CD8-positive, alpha-beta T cell (primary cell): ENCODE measurements at regions of chr20 and their contacts with region 1.

Region 1: DNA sequence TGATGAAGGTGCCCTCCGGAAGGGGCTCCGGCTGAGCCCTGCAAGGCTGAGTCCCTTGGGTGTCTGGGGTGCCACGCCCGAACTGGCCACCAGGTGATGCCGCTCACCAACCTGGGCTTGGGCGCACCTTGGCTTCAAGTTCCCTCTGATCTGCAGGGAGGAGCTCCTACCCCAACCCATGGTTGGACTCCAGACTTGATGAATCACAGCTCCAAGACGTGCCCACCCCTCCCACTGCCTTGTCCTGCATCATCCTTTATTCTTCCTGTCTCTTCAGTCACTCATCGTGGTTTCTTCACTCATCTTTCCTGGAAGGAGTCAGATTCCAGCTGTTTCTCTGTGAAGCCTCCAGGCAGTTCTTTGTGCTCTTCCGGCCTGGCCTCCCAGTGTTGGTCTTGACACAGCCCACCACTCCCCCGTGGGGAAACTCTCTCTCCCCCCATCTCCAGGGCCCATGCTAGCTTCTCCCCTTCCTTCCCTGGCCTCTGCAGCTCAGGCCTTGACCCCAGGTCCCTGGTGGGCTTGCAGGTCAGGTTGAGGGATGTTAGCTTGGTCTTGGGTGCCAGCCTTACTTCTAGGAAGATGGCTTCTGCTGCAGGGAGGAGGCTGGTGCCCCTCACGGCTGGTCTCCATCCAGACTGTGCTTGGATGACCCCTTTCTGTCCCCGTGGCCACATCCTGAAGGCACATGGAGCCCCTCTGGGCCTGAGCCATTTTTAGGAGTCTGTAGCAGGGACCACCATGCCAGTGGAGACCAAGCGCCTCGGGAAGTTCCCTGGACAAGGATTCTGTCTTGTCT is 2.6 kb upstream of the ZBP1 start:
- DNase-seq: peak; percentile 52 to 80 (median 76)
- ATAC-seq: peak; percentile 34
- H3K4me3 ChIP-seq: no peak overlapping the region
- H3K4me3 Mint-ChIP-seq: peak overlapping the region; percentile 57
- H3K27ac ChIP-seq: no peak overlapping the region
- H3K27ac Mint-ChIP-seq: peak overlapping the region; percentile 84
- H3K4me1 ChIP-seq: peaks cover 73% of the 10 kb centered on the region
- H3K4me1 Mint-ChIP-seq: peaks cover 78% of the 10 kb centered on the region
- H3K27me3 ChIP-seq: no peaks in the 10 kb centered on the region
- H3K27me3 Mint-ChIP-seq: no peaks in the 10 kb centered on the region
- CTCF ChIP-seq: peak; percentile 72

Region 2: DNA sequence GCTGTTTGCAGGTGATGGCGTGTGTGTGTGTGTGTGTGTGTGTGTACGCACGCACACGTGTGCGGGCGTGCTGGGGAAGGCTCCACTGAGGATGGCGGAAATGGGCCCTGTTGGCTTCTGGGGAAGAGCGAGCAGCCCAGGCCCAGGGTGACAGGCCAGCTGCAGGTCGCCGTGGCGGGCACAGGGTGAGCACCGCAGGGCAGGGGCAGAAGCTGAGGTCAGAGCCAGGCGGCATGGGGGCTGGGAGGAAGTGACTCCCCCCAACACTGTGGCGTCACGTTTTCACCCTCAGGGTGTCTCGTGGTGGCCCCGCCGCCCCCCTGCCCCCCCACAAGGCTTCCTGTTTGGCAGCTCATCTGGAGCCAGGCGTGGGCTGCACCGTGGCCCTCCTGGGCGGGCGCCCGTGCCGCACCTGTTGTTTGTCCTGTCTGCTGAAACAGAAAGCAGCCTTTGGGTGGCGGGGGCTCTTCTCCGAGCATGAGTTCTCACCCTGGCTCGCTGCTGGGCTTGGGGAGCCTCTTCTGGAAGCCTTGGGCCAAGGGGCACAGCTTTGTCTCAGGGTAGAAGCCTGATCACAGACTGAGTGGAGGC is 224.5 kb before region 1 on chr20:
- CTCF ChIA-PET with region 1: no interaction called
- POLR2A ChIA-PET with region 1: interaction called, 3 read pairs
- intact Hi-C with region 1: loop called (anchors 1 to 2 kb)
- DNase-seq: peak; percentile 88 to 98 (median 96)
- ATAC-seq: peak; percentile 69
- H3K4me3 ChIP-seq: peak overlapping the region; percentile 40 to 63
- H3K4me3 Mint-ChIP-seq: peak overlapping the region; percentile 76
- H3K27ac ChIP-seq: peak overlapping the region; percentile 78 to 90
- H3K27ac Mint-ChIP-seq: peak overlapping the region; percentile 97
- H3K4me1 ChIP-seq: peaks cover 96% of the 10 kb centered on the region
- H3K4me1 Mint-ChIP-seq: peaks cover 93% of the 10 kb centered on the region
- H3K27me3 ChIP-seq: no peaks in the 10 kb centered on the region
- H3K27me3 Mint-ChIP-seq: no peaks in the 10 kb centered on the region
- CTCF ChIP-seq: no peak

Region 3: GRCh38 chr20:57654363-57654997 is 31.7 kb after region 1 on chr20:
- CTCF ChIA-PET with region 1: interaction called, 103 read pairs
- POLR2A ChIA-PET with region 1: interaction called, 9 read pairs
- intact Hi-C with region 1: loop called (anchors 1 to 2 kb)
- DNase-seq: peak; percentile 32 to 82 (median 62)
- ATAC-seq: peak; percentile 74
- H3K4me3 ChIP-seq: no peak overlapping the region
- H3K4me3 Mint-ChIP-seq: no peak overlapping the region
- H3K27ac ChIP-seq: no peak overlapping the region
- H3K27ac Mint-ChIP-seq: no peak overlapping the region
- H3K4me1 ChIP-seq: peaks cover 39% of the 10 kb centered on the region
- H3K4me1 Mint-ChIP-seq: peaks cover 38% of the 10 kb centered on the region
- H3K27me3 ChIP-seq: no peaks in the 10 kb centered on the region
- H3K27me3 Mint-ChIP-seq: no peaks in the 10 kb centered on the region
- CTCF ChIP-seq: peak; percentile 94

Region 4: GRCh38 chr20:57665589-57665971 is 42.8 kb after region 1 on chr20:
- CTCF ChIA-PET with region 1: no interaction called
- POLR2A ChIA-PET with region 1: no interaction called
- intact Hi-C with region 1: no loop called
- DNase-seq: no peak
- ATAC-seq: no peak
- H3K4me3 ChIP-seq: no peak overlapping the region
- H3K4me3 Mint-ChIP-seq: no peak overlapping the region
- H3K27ac ChIP-seq: no peak overlapping the region
- H3K27ac Mint-ChIP-seq: no peak overlapping the region
- H3K4me1 ChIP-seq: peaks cover 15% of the 10 kb centered on the region
- H3K4me1 Mint-ChIP-seq: peaks cover 15% of the 10 kb centered on the region
- H3K27me3 ChIP-seq: peaks cover 0 to 3% of the 10 kb centered on the region in 2 experiments
- H3K27me3 Mint-ChIP-seq: no peaks in the 10 kb centered on the region
- CTCF ChIP-seq: no peak

Region 5: GRCh38 chr20:57709931-57710799 is 87.4 kb after region 1 on chr20 and contains the start of gene PMEPA1:
- CTCF ChIA-PET with region 1: interaction called, 8 read pairs
- POLR2A ChIA-PET with region 1: interaction called, 3 read pairs
- intact Hi-C with region 1: loop called in 1 of 2 experiments (anchors 2 kb)
- DNase-seq: peak; percentile 87 to 97 (median 91)
- ATAC-seq: peak; percentile 86
- H3K4me3 ChIP-seq: peak within 1 kb of the TSS; percentile 64 to 99
- H3K4me3 Mint-ChIP-seq: peak within 1 kb of the TSS; percentile 92
- H3K27ac ChIP-seq: peak within 1 kb of the TSS; percentile 48 to 78
- H3K27ac Mint-ChIP-seq: peak within 1 kb of the TSS; percentile 96
- H3K4me1 ChIP-seq: peaks cover 32% of the 10 kb centered on the region
- H3K4me1 Mint-ChIP-seq: peaks cover 33% of the 10 kb centered on the region
- H3K27me3 ChIP-seq: peaks cover 0 to 12% of the 10 kb centered on the region in 2 experiments
- H3K27me3 Mint-ChIP-seq: no peaks in the 10 kb centered on the region
- CTCF ChIP-seq: no peak
- total RNA-seq, gene PMEPA1: 22.2 to 22.4 TPM

Region 6: DNA sequence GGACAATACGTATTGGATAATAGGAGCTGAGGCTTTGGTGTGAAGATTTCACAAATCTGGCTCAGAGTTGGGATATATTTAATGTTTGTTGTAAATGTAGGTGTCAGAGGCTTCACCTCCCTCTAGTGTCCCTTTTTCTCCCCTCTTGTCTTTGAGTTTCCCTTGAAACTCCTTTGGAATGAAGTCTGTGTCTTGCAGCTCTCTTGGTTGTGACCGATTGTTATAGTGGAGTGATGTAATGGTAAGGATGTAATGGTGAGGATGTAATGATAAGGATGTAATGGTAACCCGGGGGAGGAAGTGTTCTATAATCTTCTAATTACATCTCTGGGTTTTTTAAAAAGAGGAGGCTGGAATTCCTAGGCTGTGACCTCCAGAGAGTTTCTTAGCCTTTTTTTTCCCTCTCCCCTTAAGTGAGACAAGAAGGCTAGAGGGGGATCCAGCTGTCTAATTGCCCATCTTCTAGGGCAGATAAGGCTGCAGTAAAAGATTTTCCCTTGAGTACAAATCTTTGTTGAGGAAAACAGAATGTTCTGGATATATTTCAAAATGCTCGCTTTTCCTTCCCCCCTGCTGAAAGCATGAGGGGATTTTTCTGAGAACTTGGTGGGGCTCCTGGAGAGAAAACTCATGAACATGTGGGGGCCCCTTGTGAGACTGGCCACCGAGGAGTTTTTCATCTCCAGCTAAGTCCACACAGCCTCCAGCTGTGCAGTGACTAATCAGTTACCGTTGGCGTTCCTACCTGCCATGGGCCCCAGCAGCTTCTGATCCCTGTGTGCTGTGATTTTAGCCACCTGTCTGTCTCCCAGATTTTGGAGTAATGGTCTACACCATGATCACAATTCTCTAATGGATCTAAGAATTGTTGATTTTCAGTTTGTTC is 243.7 kb after region 1 on chr20:
- CTCF ChIA-PET with region 1: no interaction called
- POLR2A ChIA-PET with region 1: no interaction called
- intact Hi-C with region 1: no loop called
- DNase-seq: peak in 1 of 9 experiments; percentile 21
- ATAC-seq: no peak
- H3K4me3 ChIP-seq: no peak overlapping the region
- H3K4me3 Mint-ChIP-seq: no peak overlapping the region
- H3K27ac ChIP-seq: no peak overlapping the region
- H3K27ac Mint-ChIP-seq: no peak overlapping the region
- H3K4me1 ChIP-seq: peaks cover 17% of the 10 kb centered on the region
- H3K4me1 Mint-ChIP-seq: peaks cover 18% of the 10 kb centered on the region
- H3K27me3 ChIP-seq: peaks cover 0 to 4% of the 10 kb centered on the region in 2 experiments
- H3K27me3 Mint-ChIP-seq: peaks cover 12% of the 10 kb centered on the region
- CTCF ChIP-seq: no peak

Region 7: DNA sequence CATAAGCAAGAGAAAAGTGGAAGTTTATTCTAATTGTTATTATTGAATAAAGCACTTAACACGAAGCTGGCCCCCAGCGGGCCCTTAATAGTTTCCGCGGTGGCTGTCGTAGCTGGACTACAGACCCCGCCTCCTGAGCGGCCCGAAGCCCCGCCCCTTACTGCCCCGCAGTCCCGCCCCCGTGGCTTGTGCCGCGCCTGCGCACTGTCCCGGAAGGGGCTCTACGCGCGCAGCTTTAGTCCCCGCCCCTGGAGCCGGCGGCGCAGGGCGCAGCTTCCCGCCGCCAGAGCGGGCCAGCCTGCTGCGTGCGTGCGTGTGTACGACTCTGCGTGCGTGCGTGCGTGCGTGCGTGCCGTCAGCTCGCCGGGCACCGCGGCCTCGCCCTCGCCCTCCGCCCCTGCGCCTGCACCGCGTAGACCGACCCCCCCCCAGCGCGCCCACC is 766.1 kb after region 1 on chr20 and contains the start of gene VAPB:
- CTCF ChIA-PET with region 1: no interaction called
- POLR2A ChIA-PET with region 1: no interaction called
- intact Hi-C with region 1: loop called in 1 of 2 experiments (anchors 10 kb)
- DNase-seq: peak; percentile 94 to 99 (median 97)
- ATAC-seq: peak; percentile 95
- H3K4me3 ChIP-seq: peak within 1 kb of the TSS; percentile 87 to 90
- H3K4me3 Mint-ChIP-seq: peak within 1 kb of the TSS; percentile 88
- H3K27ac ChIP-seq: peak within 1 kb of the TSS; percentile 98 to 99
- H3K27ac Mint-ChIP-seq: peak within 1 kb of the TSS; percentile 96
- H3K4me1 ChIP-seq: peaks cover 43% of the 10 kb centered on the region
- H3K4me1 Mint-ChIP-seq: peaks cover 40% of the 10 kb centered on the region
- H3K27me3 ChIP-seq: peaks cover 0 to 2% of the 10 kb centered on the region in 2 experiments
- H3K27me3 Mint-ChIP-seq: peaks cover 4% of the 10 kb centered on the region
- CTCF ChIP-seq: no peak
- total RNA-seq, gene VAPB: 29.3 to 32.3 TPM